Activated naive CD4-positive, alpha-beta T cell treated with anti-CD3 and anti-CD28 coated beads for 36 hours (primary cell): ENCODE measurements at regions of chr4 and their contacts with region 1.

Region 1: GRCh38 chr4:119646347-119647071 is 17.9 kb upstream of the PDE5A start:
- DNase-seq: no peak
- H3K4me3 Mint-ChIP-seq: no peak overlapping the region
- H3K27ac Mint-ChIP-seq: no peak overlapping the region
- H3K4me1 Mint-ChIP-seq: no peaks in the 10 kb centered on the region
- H3K27me3 Mint-ChIP-seq: no peaks in the 10 kb centered on the region

Region 2: GRCh38 chr4:119597377-119597776 is 49.1 kb before region 1 on chr4:
- CTCF ChIA-PET with region 1: no interaction called
- intact Hi-C with region 1: loop called (anchors 5 kb)
- DNase-seq: no peak
- H3K4me3 Mint-ChIP-seq: no peak overlapping the region
- H3K27ac Mint-ChIP-seq: no peak overlapping the region
- H3K4me1 Mint-ChIP-seq: no peaks in the 10 kb centered on the region
- H3K27me3 Mint-ChIP-seq: peaks cover 3% of the 10 kb centered on the region

Region 3: GRCh38 chr4:120536884-120537283 is 890.4 kb after region 1 on chr4:
- CTCF ChIA-PET with region 1: no interaction called
- intact Hi-C with region 1: no loop called
- DNase-seq: no peak
- H3K4me3 Mint-ChIP-seq: no peak overlapping the region
- H3K27ac Mint-ChIP-seq: no peak overlapping the region
- H3K4me1 Mint-ChIP-seq: no peaks in the 10 kb centered on the region
- H3K27me3 Mint-ChIP-seq: peaks cover 13% of the 10 kb centered on the region